Sciatic nerve (tissue), 2 donors: ENCODE measurements at regions of chr10 and their contacts with region 1.

Region 1: DNA sequence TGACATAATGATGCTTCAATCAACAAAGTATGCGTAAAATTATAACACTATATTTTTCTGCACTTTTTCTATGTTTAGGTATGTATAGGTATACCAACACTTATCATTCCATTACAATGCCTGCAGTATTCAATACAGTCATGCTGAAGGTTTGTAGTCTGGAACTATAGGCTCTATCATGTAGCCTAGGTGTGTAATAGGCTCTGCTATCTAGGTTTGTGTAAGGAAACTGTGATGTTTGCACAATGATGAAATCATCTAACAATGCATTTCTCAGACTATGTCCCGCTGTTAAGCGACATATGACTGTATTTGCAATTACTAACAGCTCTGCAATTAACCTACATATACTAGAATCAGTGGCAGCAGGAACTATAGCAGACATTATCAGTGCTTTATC is 1447.5 kb downstream of the GATA3 start:
- DNase-seq: no peak
- ATAC-seq: no peak

Region 2: GRCh38 chr10:8628186-8628759 is 873.7 kb before region 1 on chr10:
- intact Hi-C with region 1: no loop called
- DNase-seq: no peak
- ATAC-seq: no peak

Region 3: DNA sequence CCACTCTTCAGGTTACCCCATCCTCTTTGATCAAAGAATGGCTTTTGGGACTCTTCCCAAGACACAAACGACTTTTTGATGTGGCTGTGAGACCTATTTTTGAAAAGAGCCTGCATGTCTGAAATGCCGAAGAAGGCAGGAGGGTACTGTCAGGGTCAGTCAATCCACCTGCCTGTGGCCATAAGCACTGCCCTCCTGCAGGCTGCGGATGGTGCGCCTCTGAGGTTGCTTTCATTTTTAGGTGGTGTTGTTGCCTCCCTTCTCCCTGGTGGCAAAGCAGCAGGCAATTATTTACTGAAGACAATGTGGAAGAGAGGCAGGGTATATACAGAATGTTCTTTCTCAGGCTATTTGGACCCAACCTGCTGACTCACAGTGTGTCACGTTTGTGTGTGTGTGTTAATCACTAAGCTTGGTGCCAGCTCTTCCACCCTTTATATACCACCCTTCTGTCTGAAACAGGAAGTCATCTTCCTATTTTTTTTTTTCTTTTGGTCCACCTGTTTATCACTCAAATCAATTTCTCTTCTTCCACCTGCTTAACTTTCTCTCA is 94.5 kb after region 1 on chr10:
- intact Hi-C with region 1: no loop called
- DNase-seq: no peak
- ATAC-seq: no peak

Region 4: GRCh38 chr10:10734356-10735064 is 1232.6 kb after region 1 on chr10:
- intact Hi-C with region 1: loop called (anchors 10 kb)
- DNase-seq: no peak
- ATAC-seq: no peak